Activated CD4-positive, alpha-beta memory T cell treated with anti-CD3 and anti-CD28 coated beads for 36 hours (primary cell): ENCODE measurements at regions of chr5 and their contacts with region 1.

Region 1: GRCh38 chr5:40386289-40386688 is 293.4 kb upstream of the PTGER4 start:
- DNase-seq: peak; percentile 56
- H3K4me3 Mint-ChIP-seq: no peak overlapping the region
- H3K27ac Mint-ChIP-seq: peak overlapping the region; percentile 62
- H3K4me1 Mint-ChIP-seq: peaks cover 90% of the 10 kb centered on the region
- H3K27me3 Mint-ChIP-seq: no peaks in the 10 kb centered on the region

Region 2: DNA sequence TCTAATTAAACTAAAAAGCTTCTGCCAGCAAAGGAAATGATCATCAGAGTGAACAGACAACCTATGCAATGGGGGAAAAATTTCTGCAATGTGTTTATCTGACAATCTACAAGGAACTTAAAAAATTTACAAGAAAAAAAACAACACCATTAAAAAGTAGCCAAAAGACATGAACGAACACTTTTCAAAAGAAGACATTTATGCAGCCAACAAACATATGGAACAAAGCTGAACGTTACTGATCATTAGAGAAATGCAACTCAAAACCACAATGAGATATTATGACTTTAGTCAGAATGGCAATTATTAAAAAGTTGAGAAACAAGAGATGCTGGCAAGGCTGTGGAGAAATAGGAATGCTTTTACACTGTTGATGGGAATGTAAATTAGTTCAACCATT is 431.1 kb before region 1 on chr5:
- CTCF ChIA-PET with region 1: no interaction called
- POLR2A ChIA-PET with region 1: no interaction called
- intact Hi-C with region 1: no loop called
- DNase-seq: no peak
- H3K4me3 Mint-ChIP-seq: no peak overlapping the region
- H3K27ac Mint-ChIP-seq: no peak overlapping the region
- H3K4me1 Mint-ChIP-seq: no peaks in the 10 kb centered on the region
- H3K27me3 Mint-ChIP-seq: no peaks in the 10 kb centered on the region

Region 3: DNA sequence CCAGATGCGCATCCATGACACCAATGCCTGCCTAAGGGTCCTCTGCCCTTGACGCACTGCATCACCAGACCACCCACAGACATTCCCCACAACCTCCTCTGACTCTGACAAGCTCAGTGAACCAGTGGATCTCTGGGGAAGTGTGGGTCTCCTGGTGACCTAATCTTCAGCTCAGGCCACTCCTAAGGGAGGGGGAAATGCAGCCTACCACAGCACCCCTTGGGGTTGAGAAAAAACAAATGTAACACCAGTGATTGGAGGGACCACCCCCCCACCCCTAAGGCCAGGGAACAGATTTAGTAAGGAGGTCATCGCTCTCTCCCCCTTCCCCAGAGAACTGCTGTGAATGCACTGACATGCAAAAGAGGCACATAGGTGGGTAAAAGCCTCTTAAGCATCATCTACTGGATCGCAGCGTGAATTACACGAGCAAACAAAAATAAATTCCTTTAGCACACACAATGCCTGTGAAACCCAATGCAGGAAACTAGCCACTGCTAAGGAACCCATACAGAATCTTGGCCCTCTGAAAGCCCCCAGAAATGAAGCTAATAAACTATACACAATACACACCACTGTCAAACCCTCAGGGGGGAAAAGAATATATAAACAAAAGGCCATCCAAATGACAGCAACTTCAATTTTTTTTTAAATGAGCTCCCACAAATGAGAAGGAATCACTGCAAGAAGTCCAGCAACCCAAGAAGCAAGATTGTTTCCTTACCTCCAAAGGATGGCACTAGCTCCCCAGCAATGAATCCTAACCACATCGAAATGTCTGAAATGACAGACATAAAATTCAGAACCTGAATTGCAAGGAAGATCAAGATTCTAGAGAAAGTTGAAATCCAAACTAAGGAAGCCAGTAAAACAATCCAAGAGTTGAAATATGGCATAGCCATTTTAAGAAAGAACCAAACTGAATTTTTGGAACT is 220.2 kb before region 1 on chr5:
- CTCF ChIA-PET with region 1: interaction called, 3 read pairs
- POLR2A ChIA-PET with region 1: no interaction called
- intact Hi-C with region 1: loop called (anchors 1 kb)
- DNase-seq: peak; percentile 32
- H3K4me3 Mint-ChIP-seq: no peak overlapping the region
- H3K27ac Mint-ChIP-seq: no peak overlapping the region
- H3K4me1 Mint-ChIP-seq: peaks cover 12% of the 10 kb centered on the region
- H3K27me3 Mint-ChIP-seq: peaks cover 2% of the 10 kb centered on the region

Region 4: DNA sequence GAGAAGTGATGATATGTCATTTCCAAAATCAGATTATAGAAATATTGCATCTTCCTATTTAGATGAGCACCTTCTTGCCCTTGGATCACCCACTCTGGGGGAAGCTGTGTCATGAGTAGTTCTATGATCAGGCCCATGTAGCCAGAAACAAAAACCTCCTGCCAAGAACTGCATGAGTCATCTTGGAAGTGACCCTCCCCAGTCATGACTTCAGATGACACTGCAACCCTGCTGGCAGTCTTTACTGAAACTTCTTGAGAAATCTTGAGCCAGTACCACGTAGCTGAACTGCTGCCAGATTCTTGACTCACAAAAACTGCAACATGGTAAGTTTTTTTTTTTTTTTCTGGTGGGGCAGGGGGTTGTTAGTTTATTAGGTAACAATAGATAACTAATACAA is 146.2 kb before region 1 on chr5:
- CTCF ChIA-PET with region 1: no interaction called
- POLR2A ChIA-PET with region 1: no interaction called
- intact Hi-C with region 1: loop called (anchors 1 kb)
- DNase-seq: peak; percentile 84
- H3K4me3 Mint-ChIP-seq: peak overlapping the region; percentile 21
- H3K27ac Mint-ChIP-seq: peak overlapping the region; percentile 92
- H3K4me1 Mint-ChIP-seq: peaks cover 42% of the 10 kb centered on the region
- H3K27me3 Mint-ChIP-seq: no peaks in the 10 kb centered on the region

Region 5: DNA sequence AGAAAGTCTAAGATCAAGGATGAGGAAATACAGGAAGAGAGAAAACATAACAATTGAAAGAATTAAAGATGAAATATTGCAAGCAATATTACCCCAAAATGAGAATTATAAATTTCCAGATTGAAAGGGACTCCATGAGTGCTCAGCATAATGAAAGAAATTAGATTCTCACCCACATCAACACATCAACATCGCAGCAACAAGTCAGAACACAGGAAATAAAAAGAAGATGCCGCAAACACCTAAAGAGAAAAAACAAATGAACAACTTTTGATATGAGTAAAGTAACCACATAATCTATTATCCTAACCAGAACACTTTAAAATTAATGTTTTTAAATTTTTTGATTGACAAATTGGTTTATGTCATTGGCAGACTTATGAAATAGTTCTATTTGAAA is 24.9 kb before region 1 on chr5:
- CTCF ChIA-PET with region 1: no interaction called
- POLR2A ChIA-PET with region 1: no interaction called
- intact Hi-C with region 1: loop called (anchors 2 kb)
- DNase-seq: no peak
- H3K4me3 Mint-ChIP-seq: no peak overlapping the region
- H3K27ac Mint-ChIP-seq: no peak overlapping the region
- H3K4me1 Mint-ChIP-seq: peaks cover 28% of the 10 kb centered on the region
- H3K27me3 Mint-ChIP-seq: no peaks in the 10 kb centered on the region

Region 6: GRCh38 chr5:40437452-40437861 is 51.2 kb after region 1 on chr5:
- CTCF ChIA-PET with region 1: interaction called, 4 read pairs
- POLR2A ChIA-PET with region 1: interaction called, 10 read pairs
- intact Hi-C with region 1: loop called (anchors 1 kb)
- DNase-seq: peak; percentile 58
- H3K4me3 Mint-ChIP-seq: no peak overlapping the region
- H3K27ac Mint-ChIP-seq: peak overlapping the region; percentile 70
- H3K4me1 Mint-ChIP-seq: peaks cover 74% of the 10 kb centered on the region
- H3K27me3 Mint-ChIP-seq: no peaks in the 10 kb centered on the region

Region 7: DNA sequence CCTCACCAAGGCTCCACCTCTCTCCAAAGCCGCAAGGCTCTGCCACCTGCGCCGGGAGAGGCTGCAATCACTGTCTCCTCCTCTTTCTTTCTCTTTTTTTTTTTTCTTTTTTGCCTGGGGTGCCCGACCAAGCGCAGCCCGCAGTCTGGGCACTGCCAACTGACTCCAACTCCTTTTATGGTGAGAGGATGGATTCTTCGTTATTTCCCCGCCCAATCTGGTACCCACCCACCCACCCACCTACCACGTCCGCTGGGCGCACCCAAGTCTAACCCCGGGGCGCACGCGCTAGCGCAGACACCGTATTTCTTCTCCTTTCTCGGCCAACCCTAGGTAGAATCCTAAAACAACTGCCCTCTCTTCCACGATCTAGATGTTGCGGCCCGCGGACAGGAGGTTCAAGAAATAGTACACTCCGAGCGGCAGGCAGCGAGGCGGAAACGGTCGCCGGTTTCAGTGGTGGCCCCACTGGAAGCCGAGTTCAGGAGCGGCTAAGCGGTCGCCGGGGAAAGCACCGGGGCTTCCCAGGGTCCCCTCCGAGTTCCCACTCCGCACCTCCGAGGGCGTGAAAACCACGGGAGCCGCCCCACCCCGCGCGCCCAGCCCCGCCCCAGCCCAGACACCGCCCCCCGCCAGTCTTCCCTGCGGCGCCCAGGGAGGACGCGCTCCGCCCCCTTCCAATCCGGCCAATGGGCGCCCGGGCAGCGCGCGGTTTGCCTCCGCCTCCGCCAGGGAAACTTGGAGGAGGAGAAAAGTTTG is 293.0 kb after region 1 on chr5:
- CTCF ChIA-PET with region 1: interaction called, 7 read pairs
- POLR2A ChIA-PET with region 1: interaction called, 5 read pairs
- intact Hi-C with region 1: loop called (anchors 1 kb)
- DNase-seq: peak; percentile 96
- H3K4me3 Mint-ChIP-seq: peak overlapping the region; percentile 93
- H3K27ac Mint-ChIP-seq: peak overlapping the region; percentile 97
- H3K4me1 Mint-ChIP-seq: peaks cover 37% of the 10 kb centered on the region
- H3K27me3 Mint-ChIP-seq: no peaks in the 10 kb centered on the region

Region 8: GRCh38 chr5:40834849-40835787 is 448.8 kb after region 1 on chr5 and contains the start of gene RPL37:
- CTCF ChIA-PET with region 1: no interaction called
- POLR2A ChIA-PET with region 1: no interaction called
- intact Hi-C with region 1: loop called (anchors 10 kb)
- DNase-seq: peak; percentile 96
- H3K4me3 Mint-ChIP-seq: peak within 1 kb of the TSS; percentile 100
- H3K27ac Mint-ChIP-seq: peak within 1 kb of the TSS; percentile 100
- H3K4me1 Mint-ChIP-seq: peaks cover 56% of the 10 kb centered on the region
- H3K27me3 Mint-ChIP-seq: no peaks in the 10 kb centered on the region
- total RNA-seq, gene RPL37: 1,815 to 1,873 TPM